Gastrocnemius medialis (tissue), 4 donors: ENCODE measurements at regions of chr15 and their contacts with region 1.

Region 1: DNA sequence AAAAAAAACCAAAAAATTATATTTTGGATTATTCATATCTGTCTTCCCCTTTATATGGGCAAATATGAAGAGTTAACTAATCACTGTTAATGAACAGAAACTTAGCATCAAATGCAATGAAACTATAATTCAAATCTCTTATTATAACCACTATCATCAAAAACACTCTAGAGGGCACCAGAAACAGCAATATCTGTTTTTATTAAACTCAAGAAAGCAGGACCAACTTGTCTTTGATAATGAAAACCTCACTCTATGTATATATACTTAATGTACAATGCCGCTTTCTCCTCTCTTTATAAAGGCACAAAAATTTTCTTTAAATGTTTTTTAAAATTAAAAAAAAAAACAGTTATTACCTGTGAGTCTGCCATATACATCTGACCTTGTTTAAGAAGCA is 92.7 kb downstream of the UACA start:
- DNase-seq: no peak
- ATAC-seq: no peak
- H3K4me3 ChIP-seq: no peak overlapping the region
- H3K27ac ChIP-seq: no peak overlapping the region
- H3K4me1 ChIP-seq: peaks cover 0 to 3% of the 10 kb centered on the region in 2 donors
- H3K27me3 ChIP-seq: no peaks in the 10 kb centered on the region
- CTCF ChIP-seq: no peak
- POLR2A ChIP-seq: no peak

Region 2: DNA sequence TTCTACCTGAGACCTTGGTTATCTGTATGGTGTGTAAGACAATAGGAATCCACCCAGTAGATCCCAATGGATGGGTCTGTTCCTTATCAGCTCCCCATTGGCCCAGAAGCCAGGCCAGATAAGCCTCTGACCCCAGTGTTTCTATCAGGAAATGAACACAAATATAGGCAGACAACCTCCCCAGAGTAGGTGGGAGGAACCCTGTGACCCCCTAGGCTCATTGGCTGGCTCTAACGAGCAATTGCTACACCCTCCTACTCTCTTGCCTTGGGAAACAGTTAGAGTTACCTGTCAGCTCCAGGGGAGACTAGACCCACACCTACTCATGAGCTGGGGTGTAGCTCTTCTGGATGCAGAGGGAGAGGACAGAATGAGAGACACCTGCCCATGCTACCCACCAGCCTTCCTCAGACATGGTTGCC is 207.2 kb before region 1 on chr15:
- in situ Hi-C with region 1: no loop called
- intact Hi-C with region 1: no loop called
- DNase-seq: no peak
- ATAC-seq: no peak
- H3K4me3 ChIP-seq: no peak overlapping the region
- H3K27ac ChIP-seq: no peak overlapping the region
- H3K4me1 ChIP-seq: peaks cover 0 to 3% of the 10 kb centered on the region in 2 donors
- H3K27me3 ChIP-seq: no peaks in the 10 kb centered on the region
- CTCF ChIP-seq: no peak
- POLR2A ChIP-seq: no peak

Region 3: DNA sequence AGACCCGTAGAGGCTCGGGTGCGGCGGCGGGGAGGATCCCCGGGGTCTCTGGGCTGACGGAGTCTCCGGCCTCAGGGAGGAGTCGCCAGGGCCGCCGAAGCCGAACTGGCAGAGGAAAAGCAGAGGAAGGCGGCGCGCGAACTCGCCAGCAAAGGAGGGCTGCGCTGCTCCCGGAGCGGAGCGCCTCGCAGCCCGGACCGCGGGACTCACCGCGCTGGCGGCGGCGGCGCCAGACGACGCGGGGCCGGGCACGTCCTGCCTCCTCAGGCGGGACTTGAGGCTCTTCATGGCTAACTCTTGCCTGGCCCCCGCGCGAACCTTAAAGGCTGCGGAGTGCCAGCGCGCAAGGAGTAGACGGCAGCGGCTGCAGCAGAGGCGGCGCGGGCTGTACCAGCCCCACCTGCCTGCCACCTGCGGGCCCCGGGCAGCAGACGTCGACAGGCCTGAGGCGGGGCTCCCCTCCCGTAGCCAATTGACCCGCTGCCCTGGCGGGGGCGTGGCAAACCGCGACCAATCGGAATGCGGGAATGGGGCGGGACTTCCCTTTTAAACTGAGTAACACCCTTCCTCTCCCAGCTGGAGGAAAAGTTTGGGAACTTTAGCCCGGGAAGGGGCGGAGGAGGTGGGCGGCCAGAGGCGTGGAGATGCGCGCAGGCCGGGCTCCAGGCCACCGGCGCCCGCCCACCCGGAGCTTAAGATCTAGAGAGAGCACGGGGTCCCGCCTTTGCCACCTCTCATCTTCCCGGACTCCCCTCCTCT is 92.6 kb after region 1 on chr15 and contains the start of gene UACA:
- in situ Hi-C with region 1: no loop called
- intact Hi-C with region 1: no loop called
- DNase-seq: peak; percentile 98
- ATAC-seq: peak; percentile 76 to 80
- H3K4me3 ChIP-seq: peak within 1 kb of the TSS; percentile 85 to 96 (median 92)
- H3K27ac ChIP-seq: peak within 1 kb of the TSS; percentile 95 to 99 (median 98)
- H3K4me1 ChIP-seq: peaks cover 56 to 65% of the 10 kb centered on the region in 2 donors
- H3K27me3 ChIP-seq: no peaks in the 10 kb centered on the region
- CTCF ChIP-seq: peak in 2 of 5 experiments; percentile 14 to 29
- POLR2A ChIP-seq: peak; percentile 98 to 100
- total RNA-seq, gene UACA: 101 to 192 (median 127) TPM

Region 4: GRCh38 chr15:70815644-70816043 is 145.0 kb after region 1 on chr15:
- in situ Hi-C with region 1: loop called in 2 of 4 experiments (anchors 5 to 10 kb)
- intact Hi-C with region 1: no loop called
- DNase-seq: no peak
- ATAC-seq: no peak
- H3K4me3 ChIP-seq: no peak overlapping the region
- H3K27ac ChIP-seq: no peak overlapping the region
- H3K4me1 ChIP-seq: peaks cover 0 to 4% of the 10 kb centered on the region in 2 donors
- H3K27me3 ChIP-seq: no peaks in the 10 kb centered on the region
- CTCF ChIP-seq: no peak
- POLR2A ChIP-seq: no peak